ENCODE measurements at regions of chr3 and their contacts with region 1.

Region 1: DNA sequence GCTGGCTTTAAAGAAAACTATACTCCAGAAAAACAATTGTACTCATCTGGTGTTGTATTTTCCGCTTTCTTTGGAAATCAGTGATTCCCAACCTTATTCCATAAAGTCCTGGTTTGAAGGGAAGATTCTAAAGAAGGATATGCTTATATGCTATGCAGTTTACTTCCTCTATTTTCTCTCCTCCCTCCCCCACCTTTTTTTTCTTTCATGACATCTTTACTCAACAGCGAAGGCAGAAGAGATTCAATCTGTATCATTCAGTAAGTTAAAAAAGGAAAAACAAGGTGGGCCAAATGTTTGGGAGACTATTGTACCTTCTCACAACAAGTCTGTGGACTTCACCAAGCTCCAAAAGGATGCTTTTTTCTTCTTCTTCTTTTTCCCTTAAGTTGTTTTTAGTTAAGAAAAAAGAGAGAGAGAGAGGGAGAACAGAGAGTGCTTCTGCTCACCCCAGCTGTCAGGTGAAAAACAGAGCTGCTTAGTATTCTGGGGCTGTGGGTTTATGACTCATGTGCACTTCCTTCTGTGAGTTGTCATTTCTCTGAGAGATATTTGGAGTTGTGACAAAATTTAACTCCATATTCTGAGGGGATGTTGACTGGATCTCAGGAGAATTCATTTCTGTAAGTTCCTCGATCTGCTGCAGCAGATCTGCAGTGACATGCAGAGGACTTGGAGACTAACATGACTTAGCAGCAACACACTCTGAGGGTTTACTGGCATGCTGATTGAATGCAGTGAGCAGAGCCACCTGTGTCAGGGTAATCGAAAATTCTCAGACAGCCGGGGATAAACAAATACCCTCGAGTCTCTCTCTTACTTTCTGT is 70.7 kb downstream of the SSR3 start:
- DNase-seq: peak; percentile 49
- H3K4me3 Mint-ChIP-seq: peak overlapping the region; percentile 62
- H3K27ac Mint-ChIP-seq: peak overlapping the region; percentile 86
- H3K4me1 Mint-ChIP-seq: peaks cover 24% of the 10 kb centered on the region
- H3K27me3 Mint-ChIP-seq: peaks cover 24% of the 10 kb centered on the region

Region 2: GRCh38 chr3:156291272-156292123 is 192.7 kb before region 1 on chr3:
- intact Hi-C with region 1: no loop called
- DNase-seq: no peak
- H3K4me3 Mint-ChIP-seq: no peak overlapping the region
- H3K27ac Mint-ChIP-seq: no peak overlapping the region
- H3K4me1 Mint-ChIP-seq: peaks cover 2% of the 10 kb centered on the region
- H3K27me3 Mint-ChIP-seq: peaks cover 53% of the 10 kb centered on the region

Region 3: DNA sequence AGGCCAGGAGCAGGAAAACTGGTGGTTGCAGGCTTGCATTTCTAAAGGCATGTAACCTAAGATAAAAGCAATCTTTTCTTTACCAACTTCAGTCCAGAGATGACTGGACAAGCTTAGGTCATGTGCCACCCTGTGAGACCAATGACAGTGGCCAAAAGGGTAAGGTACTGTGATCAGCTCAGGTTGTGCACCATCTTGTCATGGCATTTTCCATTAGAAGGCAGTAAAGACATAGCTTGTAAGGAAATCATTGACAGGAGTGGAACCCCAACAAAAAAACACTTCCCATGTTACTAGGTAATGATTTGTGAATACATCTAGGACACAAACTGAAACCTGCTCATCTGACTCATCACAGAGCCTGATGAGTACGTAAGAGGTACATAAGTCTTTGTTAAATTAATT is 35.6 kb after region 1 on chr3:
- intact Hi-C with region 1: loop called (anchors 1 kb)
- DNase-seq: no peak
- H3K4me3 Mint-ChIP-seq: no peak overlapping the region
- H3K27ac Mint-ChIP-seq: no peak overlapping the region
- H3K4me1 Mint-ChIP-seq: peaks cover 24% of the 10 kb centered on the region
- H3K27me3 Mint-ChIP-seq: peaks cover 88% of the 10 kb centered on the region

Region 4: GRCh38 chr3:156685198-156685597 is 201.0 kb after region 1 on chr3:
- intact Hi-C with region 1: loop called (anchors 5 kb)
- DNase-seq: no peak
- H3K4me3 Mint-ChIP-seq: peak overlapping the region; percentile 48
- H3K27ac Mint-ChIP-seq: peak overlapping the region; percentile 54
- H3K4me1 Mint-ChIP-seq: peaks cover 76% of the 10 kb centered on the region
- H3K27me3 Mint-ChIP-seq: no peaks in the 10 kb centered on the region